ENCODE measurements at regions of chr3 and their contacts with region 1.

Region 1: GRCh38 chr3:33883538-33883950 is 85.1 kb downstream of the PDCD6IP start:
- DNase-seq: peak; percentile 49
- ATAC-seq: peak; percentile 63
- H3K4me3 ChIP-seq: no peak overlapping the region
- H3K27ac ChIP-seq: no peak overlapping the region
- H3K4me1 ChIP-seq: peaks cover 3% of the 10 kb centered on the region; the same call in 1 of the 2 replicates
- H3K27me3 ChIP-seq: peaks cover 5% of the 10 kb centered on the region; the same call in 1 of the 2 replicates
- CTCF ChIP-seq: peak; percentile 86
- POLR2A ChIP-seq: no peak
- RAD21 ChIP-seq: peak; percentile 79

Region 2: DNA sequence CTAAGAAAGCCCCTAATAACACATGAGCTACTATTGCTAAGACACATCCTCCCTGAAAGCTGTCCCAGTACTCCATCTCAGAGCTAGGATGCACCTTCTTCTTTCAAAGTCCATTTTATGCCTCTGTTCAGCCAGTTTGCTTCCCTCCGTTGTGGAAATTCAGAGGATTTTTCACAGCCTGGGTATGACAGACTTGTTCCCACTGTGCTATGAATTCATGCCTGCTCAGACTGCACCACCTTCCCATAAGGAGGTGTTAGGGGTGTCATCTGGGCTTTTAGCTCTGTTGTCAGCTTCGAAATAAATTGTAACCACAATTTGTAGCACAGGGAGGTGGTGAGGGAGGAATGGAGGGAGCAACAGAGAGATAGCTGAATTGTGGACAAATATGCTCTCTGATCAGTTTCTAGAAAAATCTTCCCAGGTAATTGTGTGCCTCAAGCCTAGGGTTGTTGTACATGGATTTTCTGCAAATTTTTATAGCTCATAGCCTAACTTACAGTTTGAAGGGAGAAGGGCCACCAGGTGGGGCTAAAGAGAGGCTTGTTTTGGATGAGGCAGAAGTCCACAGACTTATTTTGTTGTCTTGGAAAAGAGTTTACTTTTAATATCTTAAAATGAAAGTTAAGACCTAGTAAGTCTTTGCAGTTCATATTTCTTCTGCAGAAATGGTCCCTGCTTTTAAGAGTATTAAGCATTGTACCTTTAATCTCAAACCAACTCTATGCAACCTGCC is 376.9 kb after region 1 on chr3:
- CTCF ChIA-PET with region 1: interaction called, 8 read pairs
- POLR2A ChIA-PET with region 1: no interaction called
- dilution Hi-C with region 1: no loop called
- in situ Hi-C with region 1: no loop called
- intact Hi-C with region 1: loop called (anchors 5 kb)
- DNase-seq: peak; percentile 50
- ATAC-seq: peak; percentile 82
- H3K4me3 ChIP-seq: no peak overlapping the region
- H3K27ac ChIP-seq: no peak overlapping the region
- H3K4me1 ChIP-seq: no peaks in the 10 kb centered on the region
- H3K27me3 ChIP-seq: no peaks in the 10 kb centered on the region
- CTCF ChIP-seq: peak; percentile 57
- POLR2A ChIP-seq: no peak
- RAD21 ChIP-seq: peak; percentile 43

Region 3: DNA sequence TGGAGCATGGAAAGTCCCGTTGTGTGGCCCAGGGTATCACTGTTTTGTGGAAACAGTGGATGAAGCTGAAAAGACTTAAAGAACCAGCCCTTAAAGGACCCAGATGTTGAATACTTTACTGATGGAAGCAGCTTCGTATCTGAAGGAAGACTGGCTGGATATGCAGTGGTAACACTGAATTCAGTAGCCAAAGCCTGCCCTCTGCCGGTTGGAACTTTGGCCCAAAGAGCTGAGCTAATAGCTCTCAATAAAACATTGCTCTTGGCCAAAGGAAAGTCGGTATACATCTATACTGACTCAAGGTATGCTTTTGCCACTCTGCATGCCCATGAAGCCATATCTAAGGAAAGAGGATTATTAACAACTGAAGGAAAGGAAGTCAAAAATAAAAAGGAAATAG is 800.3 kb after region 1 on chr3:
- CTCF ChIA-PET with region 1: interaction called, 8 read pairs
- POLR2A ChIA-PET with region 1: interaction called, 4 read pairs
- dilution Hi-C with region 1: no loop called
- in situ Hi-C with region 1: no loop called
- intact Hi-C with region 1: loop called (anchors 1 kb)
- DNase-seq: peak; percentile 11
- ATAC-seq: peak; percentile 35; the same call in 1 of the 2 replicates
- H3K4me3 ChIP-seq: no peak overlapping the region
- H3K27ac ChIP-seq: no peak overlapping the region
- H3K4me1 ChIP-seq: no peaks in the 10 kb centered on the region
- H3K27me3 ChIP-seq: no peaks in the 10 kb centered on the region
- CTCF ChIP-seq: peak; percentile 47
- POLR2A ChIP-seq: no peak
- RAD21 ChIP-seq: peak; percentile 49